Endothelial cell of umbilical vein (primary cell): ENCODE measurements at regions of chr14 and their contacts with region 1.

Region 1: DNA sequence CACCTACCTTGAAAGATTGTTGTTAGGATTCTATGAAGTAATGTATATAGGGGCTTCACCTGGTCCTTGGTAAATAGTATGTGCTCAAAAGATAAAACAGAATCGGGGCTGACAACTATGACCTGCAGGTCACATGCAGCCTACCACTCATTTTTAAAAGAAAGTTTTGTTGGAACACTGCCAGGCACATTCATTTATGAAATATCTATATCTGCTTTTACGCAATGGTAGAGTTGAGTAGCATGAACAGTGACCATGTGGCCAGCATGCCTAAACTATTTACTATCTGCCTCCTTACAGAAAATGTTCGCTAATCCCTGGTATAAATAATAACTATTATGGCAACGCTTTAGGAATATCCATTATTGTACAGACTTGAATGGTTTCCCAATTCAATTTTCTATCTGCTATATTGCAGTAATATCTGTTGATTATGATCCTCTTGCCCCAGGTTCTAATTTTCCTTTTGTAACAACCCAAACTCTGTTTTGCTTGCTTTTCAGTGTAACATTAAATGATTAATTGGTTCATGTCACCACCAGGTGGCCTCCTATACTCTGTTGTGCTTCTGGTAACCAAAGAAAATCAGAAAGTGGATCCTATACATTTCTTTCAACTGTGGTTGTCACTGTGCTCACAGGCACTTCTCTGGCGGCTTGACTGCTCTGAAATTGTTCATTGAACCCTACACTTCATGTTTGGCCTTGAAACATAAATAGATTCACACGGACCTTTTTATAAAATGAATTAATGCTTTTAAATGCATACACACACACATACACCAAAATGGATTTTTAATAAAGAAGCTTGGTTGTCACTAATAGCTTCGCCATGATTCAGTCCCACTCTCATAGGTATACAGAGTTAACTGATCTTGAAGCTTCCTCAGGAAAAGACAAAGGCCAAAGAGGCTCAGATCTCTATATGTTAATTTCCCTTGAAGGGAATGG is 227.7 kb upstream of the NPAS3 start:
- DNase-seq: peak; percentile 51
- H3K4me3 ChIP-seq: no peak overlapping the region
- H3K27ac ChIP-seq: no peak overlapping the region
- H3K4me1 ChIP-seq: no peaks in the 10 kb centered on the region
- H3K27me3 ChIP-seq: peaks cover 1 to 3% of the 10 kb centered on the region in 2 experiments
- CTCF ChIP-seq: peak; percentile 25 to 47
- POLR2A ChIP-seq: no peak

Region 2: GRCh38 chr14:32662211-32662610 is 48.8 kb before region 1 on chr14:
- CTCF ChIA-PET with region 1: no interaction called
- POLR2A ChIA-PET with region 1: no interaction called
- dilution Hi-C with region 1: no loop called
- intact Hi-C with region 1: no loop called
- DNase-seq: no peak
- H3K4me3 ChIP-seq: no peak overlapping the region
- H3K27ac ChIP-seq: no peak overlapping the region
- H3K4me1 ChIP-seq: no peaks in the 10 kb centered on the region
- H3K27me3 ChIP-seq: no peaks in the 10 kb centered on the region
- CTCF ChIP-seq: no peak
- POLR2A ChIP-seq: no peak

Region 3: GRCh38 chr14:32939254-32940065 is 228.5 kb after region 1 on chr14:
- CTCF ChIA-PET with region 1: no interaction called
- POLR2A ChIA-PET with region 1: no interaction called
- dilution Hi-C with region 1: no loop called
- intact Hi-C with region 1: loop called (anchors 5 kb)
- DNase-seq: peak; percentile 68
- H3K4me3 ChIP-seq: peak overlapping the region; percentile 20 to 56 (median 56)
- H3K27ac ChIP-seq: peak overlapping the region; percentile 44
- H3K4me1 ChIP-seq: peaks cover 8% of the 10 kb centered on the region
- H3K27me3 ChIP-seq: peaks cover 31 to 46% of the 10 kb centered on the region in 2 experiments
- CTCF ChIP-seq: no peak
- POLR2A ChIP-seq: no peak

Region 4: DNA sequence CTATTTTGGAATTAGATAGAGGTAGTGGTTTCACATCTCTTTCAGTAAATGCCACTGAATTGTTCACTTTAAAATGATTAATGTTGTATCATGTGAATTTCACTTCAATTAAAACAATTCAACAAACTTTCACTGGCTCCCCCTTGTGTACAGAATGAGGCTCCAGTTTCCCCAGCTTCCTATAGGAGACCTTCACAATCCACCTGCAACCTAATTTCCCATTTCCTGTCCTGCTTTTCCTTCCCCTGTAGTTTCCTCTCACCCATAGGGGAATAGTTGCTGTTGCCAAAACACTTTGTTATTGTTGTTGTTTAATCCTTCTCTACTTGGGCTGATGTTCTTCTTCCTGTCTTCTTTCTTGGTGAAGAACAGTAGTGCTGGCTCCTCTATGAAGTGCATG is 287.4 kb after region 1 on chr14:
- CTCF ChIA-PET with region 1: interaction called, 3 read pairs
- POLR2A ChIA-PET with region 1: no interaction called
- dilution Hi-C with region 1: no loop called
- intact Hi-C with region 1: loop called (anchors 1 kb)
- DNase-seq: peak; percentile 21
- H3K4me3 ChIP-seq: no peak overlapping the region
- H3K27ac ChIP-seq: no peak overlapping the region
- H3K4me1 ChIP-seq: no peaks in the 10 kb centered on the region
- H3K27me3 ChIP-seq: peaks cover 0 to 1% of the 10 kb centered on the region in 2 experiments
- CTCF ChIP-seq: peak; percentile 22 to 49
- POLR2A ChIP-seq: no peak

Region 5: DNA sequence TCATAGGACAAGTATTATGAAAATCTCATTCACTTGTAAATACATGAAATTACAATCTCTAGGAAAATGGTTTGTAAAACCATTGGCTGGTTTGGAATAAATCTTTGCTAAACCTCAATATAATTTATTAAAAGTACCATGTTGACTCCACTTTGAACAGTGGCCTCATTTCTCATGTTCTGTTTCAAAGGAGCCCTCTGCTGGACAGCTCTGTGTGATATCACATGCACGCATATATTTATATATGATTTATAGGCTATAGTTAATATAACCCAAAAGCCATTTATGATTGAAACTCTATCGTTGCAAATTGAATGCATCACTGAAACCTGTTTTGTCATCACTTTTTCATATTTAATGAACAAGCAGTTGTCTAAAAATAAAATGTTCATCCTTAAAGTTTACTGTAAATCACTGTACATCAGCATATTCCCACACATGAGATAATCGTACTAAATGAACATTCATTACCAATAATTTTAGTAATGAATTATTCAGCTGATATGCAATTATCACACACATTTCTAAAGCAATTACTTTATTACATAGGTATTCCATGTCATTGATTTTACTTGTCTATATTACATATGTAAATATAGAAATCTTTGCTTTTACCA is 721.5 kb after region 1 on chr14:
- CTCF ChIA-PET with region 1: interaction called, 4 read pairs
- POLR2A ChIA-PET with region 1: no interaction called
- dilution Hi-C with region 1: no loop called
- intact Hi-C with region 1: loop called (anchors 1 kb)
- DNase-seq: peak; percentile 43
- H3K4me3 ChIP-seq: no peak overlapping the region
- H3K27ac ChIP-seq: no peak overlapping the region
- H3K4me1 ChIP-seq: no peaks in the 10 kb centered on the region
- H3K27me3 ChIP-seq: no peaks in the 10 kb centered on the region
- CTCF ChIP-seq: peak; percentile 17 to 33
- POLR2A ChIP-seq: no peak